Activated CD4-positive, alpha-beta memory T cell treated with anti-CD3 and anti-CD28 coated beads, Interleukin-2, amount 10 ng/mL, durations not matched to agents 7 days and 5 days (primary cell): ENCODE measurements at regions of chr9 and their contacts with region 1.

Region 1: DNA sequence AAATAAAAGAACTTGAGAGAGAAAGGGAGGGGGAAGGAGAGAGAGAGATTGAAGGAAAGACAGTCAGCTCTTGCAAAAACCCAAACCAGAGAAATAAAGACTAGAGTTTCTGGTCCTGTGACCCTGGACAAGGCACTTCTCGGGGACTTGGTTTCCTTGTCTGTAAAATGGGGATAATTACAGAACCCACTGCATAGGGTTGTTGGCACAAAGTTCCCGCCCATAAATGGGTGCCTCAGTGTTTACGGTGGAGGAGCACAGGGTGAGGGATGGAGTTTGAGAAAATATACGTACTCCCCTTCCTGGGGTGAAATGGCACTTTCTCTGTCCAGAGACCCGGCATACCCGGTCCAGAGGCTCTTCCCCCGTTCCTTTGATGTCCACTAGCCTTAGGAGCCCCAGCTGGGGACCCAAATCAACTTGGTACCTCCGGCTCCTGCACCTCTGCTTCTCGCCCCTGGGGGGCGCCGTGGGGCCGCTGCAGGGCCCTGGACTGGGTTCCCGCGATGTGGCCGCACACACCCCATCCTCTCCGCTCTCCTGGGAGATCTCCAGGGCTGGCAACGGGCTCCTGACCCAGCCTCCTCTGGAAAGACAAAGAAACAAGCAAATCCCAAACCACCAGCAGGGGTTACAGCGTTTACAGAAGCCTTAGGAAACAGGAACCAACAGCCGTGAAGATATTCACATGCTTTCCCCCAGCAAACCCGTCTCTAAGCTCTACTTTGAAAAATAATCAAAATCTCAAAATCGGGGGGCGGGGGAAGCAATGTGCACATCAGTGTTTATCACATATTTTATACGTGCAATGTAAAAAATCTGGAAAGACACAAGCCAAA is 26.3 kb downstream of the PTGES start:
- DNase-seq: peak; percentile 68
- H3K4me3 Mint-ChIP-seq: no peak overlapping the region
- H3K27ac Mint-ChIP-seq: no peak overlapping the region
- H3K4me1 Mint-ChIP-seq: peaks cover 3% of the 10 kb centered on the region
- H3K27me3 Mint-ChIP-seq: peaks cover 10% of the 10 kb centered on the region

Region 2: GRCh38 chr9:129509522-129510270 is 216.8 kb before region 1 on chr9:
- CTCF ChIA-PET with region 1: no interaction called
- POLR2A ChIA-PET with region 1: no interaction called
- DNase-seq: no peak
- H3K4me3 Mint-ChIP-seq: no peak overlapping the region
- H3K27ac Mint-ChIP-seq: no peak overlapping the region
- H3K4me1 Mint-ChIP-seq: peaks cover 3% of the 10 kb centered on the region
- H3K27me3 Mint-ChIP-seq: peaks cover 8% of the 10 kb centered on the region

Region 3: DNA sequence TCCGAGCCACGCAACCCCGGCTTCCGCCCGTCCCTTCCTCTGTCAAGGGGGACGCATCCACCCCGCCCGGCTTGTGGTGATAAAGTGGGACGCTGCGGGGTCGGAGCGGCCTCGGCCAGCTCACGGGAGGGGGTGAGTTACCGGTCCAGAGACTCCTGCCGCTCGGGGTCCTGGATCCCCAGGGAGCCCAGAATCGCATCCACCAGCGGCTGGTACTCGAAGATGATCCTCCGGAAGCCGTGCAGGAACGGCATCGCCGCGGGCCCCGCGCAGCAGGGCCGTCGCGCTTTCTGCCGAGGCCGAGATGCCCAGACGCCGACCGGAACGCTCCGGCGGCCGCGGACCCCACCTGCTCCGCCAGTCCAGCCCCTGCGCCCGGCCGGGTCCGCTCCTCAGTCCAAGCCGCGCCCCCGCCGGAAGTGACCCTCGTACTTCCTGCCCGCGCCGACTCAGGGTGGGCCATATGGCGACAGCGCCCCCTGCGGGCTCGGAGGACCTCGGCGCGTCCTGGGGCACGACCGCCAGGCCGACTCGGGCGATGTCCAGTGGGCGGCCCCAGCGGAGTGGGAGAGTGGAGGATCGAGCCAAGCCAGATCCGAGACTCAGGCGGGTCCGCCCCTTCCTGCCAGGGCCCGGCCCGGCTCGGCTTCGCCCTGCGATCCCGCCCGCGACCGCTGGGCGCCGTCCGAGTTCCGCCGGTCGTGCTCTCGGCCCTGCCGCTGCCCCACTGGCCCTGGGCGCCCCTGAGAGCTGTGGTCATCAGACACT is 84.6 kb before region 1 on chr9 and contains the start of gene ASB6:
- CTCF ChIA-PET with region 1: interaction called, 14 read pairs
- POLR2A ChIA-PET with region 1: no interaction called
- DNase-seq: peak; percentile 94
- H3K4me3 Mint-ChIP-seq: peak within 1 kb of the TSS; percentile 81
- H3K27ac Mint-ChIP-seq: peak within 1 kb of the TSS; percentile 73
- H3K4me1 Mint-ChIP-seq: peaks cover 25% of the 10 kb centered on the region
- H3K27me3 Mint-ChIP-seq: no peaks in the 10 kb centered on the region
- total RNA-seq, gene ASB6: 22.5 to 23.4 TPM

Region 4: GRCh38 chr9:129712634-129713401 is 13.7 kb before region 1 on chr9:
- CTCF ChIA-PET with region 1: interaction called, 17 read pairs
- POLR2A ChIA-PET with region 1: interaction called, 7 read pairs
- DNase-seq: no peak
- H3K4me3 Mint-ChIP-seq: no peak overlapping the region
- H3K27ac Mint-ChIP-seq: no peak overlapping the region
- H3K4me1 Mint-ChIP-seq: peaks cover 28% of the 10 kb centered on the region
- H3K27me3 Mint-ChIP-seq: peaks cover 14% of the 10 kb centered on the region

Region 5: DNA sequence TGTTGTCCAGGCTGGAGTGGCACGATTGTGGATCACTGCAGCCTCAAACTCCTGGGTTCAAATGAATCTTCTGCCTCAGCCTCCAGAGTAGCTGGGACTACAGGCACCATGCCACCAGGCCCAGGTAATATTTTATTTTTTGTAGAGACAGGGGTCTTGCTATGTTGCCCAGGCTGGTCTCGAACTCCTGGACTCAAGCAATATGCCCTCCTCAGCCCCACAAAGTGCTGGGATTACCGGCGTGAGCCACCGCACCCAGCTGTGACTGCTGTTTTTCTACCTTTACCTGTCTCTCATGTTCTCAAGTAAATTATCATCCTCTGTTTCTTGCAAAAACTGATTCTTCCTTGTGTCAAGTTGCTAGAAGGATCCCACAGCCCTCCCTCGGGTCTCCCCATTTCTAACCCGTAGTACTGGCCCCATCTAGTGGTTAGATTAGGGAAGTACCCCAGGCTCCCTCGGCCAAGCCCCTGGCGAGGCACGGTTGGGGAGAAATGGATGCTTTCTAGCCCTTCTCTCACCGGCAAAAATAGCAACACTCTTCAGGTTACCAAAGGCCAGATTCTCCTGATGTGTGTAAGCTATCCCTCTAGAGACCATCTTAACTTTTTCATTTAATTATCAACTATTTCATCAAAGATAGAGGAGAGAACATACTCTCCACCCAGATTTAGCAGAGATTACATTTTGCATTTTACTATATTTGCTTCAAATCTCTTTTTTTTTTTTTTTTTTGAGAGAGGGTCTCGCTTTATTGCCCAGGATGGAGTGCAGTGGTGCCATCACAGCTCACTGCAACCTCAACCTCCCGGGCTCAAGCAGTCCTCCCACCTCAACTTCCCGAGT is 57.2 kb after region 1 on chr9:
- CTCF ChIA-PET with region 1: interaction called, 33 read pairs
- POLR2A ChIA-PET with region 1: interaction called, 3 read pairs
- DNase-seq: peak; percentile 74
- H3K4me3 Mint-ChIP-seq: no peak overlapping the region
- H3K27ac Mint-ChIP-seq: no peak overlapping the region
- H3K4me1 Mint-ChIP-seq: peaks cover 3% of the 10 kb centered on the region
- H3K27me3 Mint-ChIP-seq: peaks cover 30% of the 10 kb centered on the region